Activated CD4-positive, alpha-beta T cell treated with anti-CD3 and anti-CD28 coated beads, Interleukin-2, amount 10 ng/mL, durations not matched to agents 24 days and 14 days (primary cell): ENCODE measurements at regions of chr17 and their contacts with region 1.

Region 1: GRCh38 chr17:63611354-63611753 is 10.7 kb downstream of the TACO1 start:
- DNase-seq: peak; percentile 72
- H3K4me3 Mint-ChIP-seq: peak overlapping the region; percentile 68
- H3K27ac Mint-ChIP-seq: peak overlapping the region; percentile 87
- H3K4me1 Mint-ChIP-seq: peaks cover 26% of the 10 kb centered on the region
- H3K27me3 Mint-ChIP-seq: no peaks in the 10 kb centered on the region

Region 2: DNA sequence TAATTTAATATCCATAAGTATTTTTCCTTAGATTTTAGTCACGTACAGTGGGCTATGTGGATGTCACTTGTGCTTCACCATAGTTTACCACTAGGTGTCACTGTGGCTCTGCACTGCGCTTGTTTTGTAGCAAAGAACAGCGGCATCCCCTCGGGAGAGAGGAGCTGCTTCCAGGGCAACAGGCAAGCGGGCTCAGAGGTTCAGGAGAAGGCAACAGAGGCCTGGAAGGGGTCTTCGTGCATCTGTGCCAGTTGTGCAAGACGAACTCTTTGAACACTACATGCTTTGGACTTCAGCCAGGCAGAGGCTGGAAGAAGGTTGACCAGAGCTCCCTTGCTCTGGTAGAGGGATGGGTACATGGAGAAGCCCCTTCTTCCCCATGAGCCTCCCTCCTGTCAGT is 185.9 kb before region 1 on chr17:
- intact Hi-C with region 1: loop called (anchors 1 kb)
- DNase-seq: peak; percentile 93
- H3K4me3 Mint-ChIP-seq: no peak overlapping the region
- H3K27ac Mint-ChIP-seq: no peak overlapping the region
- H3K4me1 Mint-ChIP-seq: peaks cover 40% of the 10 kb centered on the region
- H3K27me3 Mint-ChIP-seq: peaks cover 2% of the 10 kb centered on the region

Region 3: GRCh38 chr17:63478791-63479494 is 132.4 kb before region 1 on chr17:
- intact Hi-C with region 1: loop called (anchors 1 kb)
- DNase-seq: peak; percentile 94
- H3K4me3 Mint-ChIP-seq: no peak overlapping the region
- H3K27ac Mint-ChIP-seq: no peak overlapping the region
- H3K4me1 Mint-ChIP-seq: peaks cover 16% of the 10 kb centered on the region
- H3K27me3 Mint-ChIP-seq: peaks cover 38% of the 10 kb centered on the region

Region 4: DNA sequence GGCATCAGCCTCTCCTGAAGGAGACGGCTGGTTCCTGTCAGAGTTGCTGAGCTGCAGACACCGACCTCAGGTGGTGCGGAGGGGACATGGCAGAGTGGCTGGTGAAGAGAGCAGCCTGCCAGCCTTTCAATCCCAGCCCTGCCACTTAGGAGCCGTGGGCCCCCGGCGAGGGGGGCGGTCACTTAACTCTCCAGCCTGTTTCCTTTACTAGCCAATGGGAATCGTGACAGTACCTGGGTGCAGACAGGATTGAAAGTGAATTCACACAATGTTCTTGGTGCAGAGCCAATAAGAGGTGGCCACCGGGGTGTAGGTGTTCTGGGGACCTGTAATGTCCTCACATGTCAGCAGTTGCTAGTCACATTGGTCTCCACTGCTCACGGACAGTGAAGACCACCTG is 121.0 kb before region 1 on chr17:
- intact Hi-C with region 1: no loop called
- DNase-seq: no peak
- H3K4me3 Mint-ChIP-seq: no peak overlapping the region
- H3K27ac Mint-ChIP-seq: no peak overlapping the region
- H3K4me1 Mint-ChIP-seq: no peaks in the 10 kb centered on the region
- H3K27me3 Mint-ChIP-seq: no peaks in the 10 kb centered on the region

Region 5: DNA sequence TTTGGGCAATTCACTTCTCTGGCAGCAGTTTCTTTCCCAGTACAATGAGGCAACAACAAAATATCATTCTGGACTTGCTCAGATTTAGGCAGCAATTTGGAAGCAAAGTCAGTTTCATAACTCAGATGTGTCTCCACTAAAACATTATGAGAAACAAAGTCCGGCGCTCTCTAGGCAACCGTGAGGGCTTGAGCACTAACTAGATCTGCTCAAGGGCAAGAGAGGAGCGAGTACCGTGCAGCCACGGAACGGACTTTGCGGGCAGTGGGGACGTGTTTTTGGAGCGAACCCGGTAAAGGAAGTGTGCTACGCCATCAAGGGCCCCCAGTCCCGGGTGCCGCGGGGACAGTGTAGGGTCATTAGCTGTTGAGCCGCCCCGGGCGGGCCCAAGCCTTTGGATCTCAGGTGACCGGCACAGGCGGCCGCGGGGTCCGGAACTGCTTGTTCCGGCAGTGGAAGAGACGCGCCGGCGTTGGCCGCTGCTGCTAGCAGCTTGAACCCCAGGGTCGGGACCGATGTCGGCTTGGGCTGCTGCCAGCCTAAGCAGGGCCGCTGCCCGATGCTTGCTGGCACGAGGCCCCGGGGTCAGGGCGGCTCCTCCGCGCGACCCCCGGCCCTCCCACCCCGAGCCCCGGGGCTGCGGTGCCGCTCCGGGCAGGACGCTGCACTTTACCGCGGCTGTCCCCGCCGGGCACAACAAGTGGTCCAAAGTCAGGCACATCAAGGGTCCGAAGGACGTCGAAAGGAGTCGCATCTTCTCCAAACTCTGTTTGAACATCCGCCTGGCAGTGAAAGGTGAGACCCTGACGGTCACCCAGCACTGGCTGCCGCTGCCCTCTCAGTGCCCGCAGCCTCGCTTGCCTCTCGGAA is 10.6 kb before region 1 on chr17 and contains the start of gene TACO1:
- intact Hi-C with region 1: loop called (anchors 1 kb)
- DNase-seq: peak; percentile 94
- H3K4me3 Mint-ChIP-seq: peak within 1 kb of the TSS; percentile 91
- H3K27ac Mint-ChIP-seq: peak within 1 kb of the TSS; percentile 90
- H3K4me1 Mint-ChIP-seq: peaks cover 17% of the 10 kb centered on the region
- H3K27me3 Mint-ChIP-seq: no peaks in the 10 kb centered on the region
- total RNA-seq, gene TACO1: 27.4 and 27.9 TPM in 2 replicates

Region 6: DNA sequence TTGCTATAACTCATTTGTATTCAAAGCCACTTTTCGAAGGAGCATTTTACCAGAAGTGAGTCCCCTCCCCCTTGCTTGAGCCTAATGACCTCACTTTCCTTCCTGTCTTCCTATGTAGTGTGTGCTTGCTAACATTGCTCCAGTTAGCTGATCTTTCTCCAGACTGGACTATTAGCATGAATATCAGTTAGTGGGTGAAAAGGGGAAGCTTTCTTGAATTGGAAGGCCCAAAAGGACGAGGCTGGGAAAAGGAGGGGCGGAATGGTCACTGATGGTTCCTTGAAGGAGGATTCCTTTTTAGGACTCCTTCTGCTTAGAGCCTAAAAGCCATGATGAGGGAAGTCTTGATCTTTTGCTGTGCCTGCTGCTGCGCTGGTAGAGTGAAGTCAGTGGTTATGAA is 22.8 kb after region 1 on chr17:
- intact Hi-C with region 1: no loop called
- DNase-seq: no peak
- H3K4me3 Mint-ChIP-seq: no peak overlapping the region
- H3K27ac Mint-ChIP-seq: peak overlapping the region; percentile 70
- H3K4me1 Mint-ChIP-seq: peaks cover 15% of the 10 kb centered on the region
- H3K27me3 Mint-ChIP-seq: no peaks in the 10 kb centered on the region